ENCODE measurements at regions of chr2 and their contacts with region 1.

Region 1: DNA sequence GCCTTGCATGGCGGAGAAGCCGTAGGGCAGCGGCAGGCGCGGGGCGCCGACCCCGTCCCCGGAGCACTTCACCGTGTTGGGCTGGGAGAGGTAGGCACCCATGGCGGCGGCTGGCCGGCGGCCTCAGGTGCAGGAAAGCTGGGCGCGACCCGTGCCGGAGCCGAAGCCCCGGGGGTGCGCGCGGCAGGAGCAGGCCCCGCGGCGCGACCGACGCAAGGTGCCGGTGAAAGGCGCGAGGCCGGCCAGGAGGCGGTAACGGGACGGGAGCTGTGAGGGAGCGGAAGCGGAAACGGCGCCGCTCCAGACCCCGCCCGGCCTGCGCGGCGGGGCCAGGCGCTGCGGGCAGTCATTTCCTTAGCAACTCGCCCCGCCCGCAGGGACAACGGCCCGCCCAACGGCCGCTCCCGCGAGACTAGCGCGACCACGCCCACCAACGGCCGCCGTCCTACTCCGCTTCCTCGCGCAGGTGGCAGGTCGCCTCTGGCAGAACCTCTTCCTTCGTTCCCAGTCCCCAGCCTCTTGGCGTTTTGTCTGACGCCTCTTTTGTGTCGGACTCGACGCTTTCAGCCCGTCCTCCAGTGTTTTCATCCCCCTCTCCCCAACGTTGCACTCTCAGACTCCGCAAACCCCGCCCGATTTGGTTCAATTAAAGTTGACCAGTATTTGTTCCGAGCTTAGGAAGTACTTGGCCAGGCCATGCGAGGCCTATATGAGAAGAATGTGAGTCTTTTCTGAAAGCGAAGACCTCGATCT is at the start of gene PPM1G:
- DNase-seq: peak; percentile 92
- H3K27ac ChIP-seq: peak within 1 kb of the TSS; percentile 88
- CTCF ChIP-seq: no peak

Region 2: DNA sequence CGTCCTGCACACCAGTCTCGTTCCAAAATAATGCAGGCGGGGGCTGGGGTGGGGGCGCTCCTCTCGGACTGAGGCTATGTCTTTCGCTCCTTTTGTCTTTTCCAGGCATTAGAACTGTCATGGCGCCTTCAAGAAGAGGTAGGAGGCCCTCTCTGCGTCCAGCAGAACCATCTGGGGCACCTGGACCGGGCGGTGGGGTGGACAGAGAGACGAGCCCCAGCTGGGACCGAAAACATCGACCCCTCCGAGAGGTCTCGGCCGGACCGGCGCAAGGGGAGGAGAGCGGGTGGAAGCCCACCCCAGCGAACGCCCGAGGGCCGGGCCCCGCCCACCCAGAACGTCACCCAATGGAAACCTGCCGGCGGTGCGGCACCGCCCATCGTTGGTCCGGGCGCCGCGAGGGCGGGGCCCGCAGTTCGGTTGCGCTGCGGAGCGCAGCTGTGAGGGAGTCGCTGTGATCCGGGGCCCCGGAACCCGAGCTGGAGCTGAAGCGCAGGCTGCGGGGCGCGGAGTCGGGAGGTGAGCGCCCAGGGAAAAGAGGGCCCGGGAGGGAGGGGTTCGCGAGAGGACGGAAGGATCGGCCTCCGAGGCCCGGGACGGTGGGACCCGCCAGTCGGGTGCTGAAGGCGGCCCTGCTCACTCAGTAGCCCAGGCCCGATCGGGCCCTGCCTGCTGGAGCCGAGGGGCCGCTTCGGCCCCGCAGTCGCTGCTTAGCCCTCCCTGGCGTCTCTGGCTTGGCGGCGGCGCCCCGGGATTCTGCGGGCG is 18.9 kb after region 1 on chr2 and contains the start of gene NRBP1:
- CTCF ChIA-PET with region 1: interaction called, 19 read pairs
- POLR2A ChIA-PET with region 1: interaction called, 7 read pairs
- DNase-seq: peak; percentile 88
- H3K27ac ChIP-seq: peak within 1 kb of the TSS; percentile 96
- CTCF ChIP-seq: no peak

Measured in RWPE1 (cell line).